ENCODE measurements at regions of chr14 and their contacts with region 1.

Region 1: DNA sequence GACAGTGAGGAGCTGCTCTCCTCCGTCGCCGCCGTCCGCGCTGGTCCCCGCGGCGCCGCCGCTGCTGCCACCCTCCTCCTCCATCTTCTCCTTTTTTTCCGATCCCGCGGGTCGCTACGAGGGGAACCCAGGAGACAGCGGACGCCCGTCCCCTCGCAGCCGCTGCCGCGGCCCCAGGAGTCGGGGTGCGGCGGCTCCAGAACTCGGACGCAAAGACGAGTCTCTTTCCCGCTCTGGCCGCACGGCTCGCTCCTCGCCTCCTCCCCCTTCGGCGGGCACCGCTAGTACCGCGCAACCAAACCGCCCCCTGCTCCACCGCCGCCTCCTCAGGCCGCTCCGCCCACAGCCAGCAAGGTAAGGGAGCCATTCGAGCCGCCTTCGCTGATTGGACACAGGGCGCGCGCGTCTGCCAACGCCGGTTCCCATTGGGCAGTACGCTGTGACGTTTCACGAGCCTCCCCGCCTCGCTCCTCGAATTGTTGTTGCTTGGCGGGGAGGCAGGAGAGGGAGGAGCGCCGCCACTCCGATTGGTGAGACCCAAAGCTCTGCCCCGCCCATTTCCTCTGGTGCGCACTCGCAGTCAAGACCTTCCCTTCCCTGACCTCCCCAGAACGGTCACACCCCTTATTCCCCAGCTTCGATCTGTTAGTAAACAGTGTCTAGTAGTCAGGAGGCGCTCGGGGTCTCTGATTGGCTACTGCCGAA is at the start of gene RPS6KA5:
- DNase-seq: peak; percentile 100
- H3K4me3 Mint-ChIP-seq: peak within 1 kb of the TSS; percentile 81
- H3K27ac Mint-ChIP-seq: peak within 1 kb of the TSS; percentile 43
- H3K4me1 Mint-ChIP-seq: peaks cover 54% of the 10 kb centered on the region
- H3K27me3 Mint-ChIP-seq: no peaks in the 10 kb centered on the region
- total RNA-seq, gene RPS6KA5: 20.5 and 21.4 TPM in 2 replicates

Region 2: GRCh38 chr14:90399541-90400444 is 660.7 kb before region 1 on chr14:
- intact Hi-C with region 1: loop called (anchors 2 kb)
- DNase-seq: peak; percentile 82
- H3K4me3 Mint-ChIP-seq: peak overlapping the region; percentile 94
- H3K27ac Mint-ChIP-seq: peak overlapping the region; percentile 97
- H3K4me1 Mint-ChIP-seq: peaks cover 48% of the 10 kb centered on the region
- H3K27me3 Mint-ChIP-seq: peaks cover 1% of the 10 kb centered on the region

Region 3: DNA sequence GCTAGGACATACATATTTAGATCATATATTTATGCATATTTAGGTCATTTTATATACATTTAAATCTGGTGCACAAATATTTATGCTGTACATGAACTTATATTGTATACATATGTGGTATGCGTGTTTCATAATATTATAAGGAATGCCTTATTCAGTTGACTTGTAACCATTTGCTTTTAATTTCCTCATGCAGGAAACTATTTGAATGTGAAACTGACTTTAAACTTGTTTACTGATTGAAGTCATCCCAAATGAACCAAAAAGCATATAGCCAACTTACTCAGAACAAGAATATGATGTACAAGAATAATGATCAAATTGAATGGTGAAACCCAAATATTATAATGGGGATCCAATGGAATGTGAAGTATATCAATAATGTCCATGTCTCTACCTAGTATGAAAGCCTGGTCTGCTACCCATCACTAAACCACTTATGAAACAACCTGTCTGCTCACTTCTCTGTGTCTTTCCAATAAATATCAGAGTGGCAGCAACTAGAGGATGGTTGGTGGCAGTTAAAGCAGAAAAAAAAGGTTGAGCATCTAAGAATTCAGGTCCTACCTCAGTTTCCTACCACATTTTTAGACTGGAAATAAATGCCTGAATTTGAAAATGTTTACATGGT is 38.4 kb before region 1 on chr14:
- intact Hi-C with region 1: loop called (anchors 1 kb)
- DNase-seq: no peak
- H3K4me3 Mint-ChIP-seq: peak overlapping the region; percentile 66
- H3K27ac Mint-ChIP-seq: peak overlapping the region; percentile 90
- H3K4me1 Mint-ChIP-seq: peaks cover 57% of the 10 kb centered on the region
- H3K27me3 Mint-ChIP-seq: no peaks in the 10 kb centered on the region

Region 4: GRCh38 chr14:91038438-91038837 is 22.1 kb before region 1 on chr14:
- intact Hi-C with region 1: no loop called
- DNase-seq: no peak
- H3K4me3 Mint-ChIP-seq: no peak overlapping the region
- H3K27ac Mint-ChIP-seq: no peak overlapping the region
- H3K4me1 Mint-ChIP-seq: peaks cover 64% of the 10 kb centered on the region
- H3K27me3 Mint-ChIP-seq: no peaks in the 10 kb centered on the region

Region 5: DNA sequence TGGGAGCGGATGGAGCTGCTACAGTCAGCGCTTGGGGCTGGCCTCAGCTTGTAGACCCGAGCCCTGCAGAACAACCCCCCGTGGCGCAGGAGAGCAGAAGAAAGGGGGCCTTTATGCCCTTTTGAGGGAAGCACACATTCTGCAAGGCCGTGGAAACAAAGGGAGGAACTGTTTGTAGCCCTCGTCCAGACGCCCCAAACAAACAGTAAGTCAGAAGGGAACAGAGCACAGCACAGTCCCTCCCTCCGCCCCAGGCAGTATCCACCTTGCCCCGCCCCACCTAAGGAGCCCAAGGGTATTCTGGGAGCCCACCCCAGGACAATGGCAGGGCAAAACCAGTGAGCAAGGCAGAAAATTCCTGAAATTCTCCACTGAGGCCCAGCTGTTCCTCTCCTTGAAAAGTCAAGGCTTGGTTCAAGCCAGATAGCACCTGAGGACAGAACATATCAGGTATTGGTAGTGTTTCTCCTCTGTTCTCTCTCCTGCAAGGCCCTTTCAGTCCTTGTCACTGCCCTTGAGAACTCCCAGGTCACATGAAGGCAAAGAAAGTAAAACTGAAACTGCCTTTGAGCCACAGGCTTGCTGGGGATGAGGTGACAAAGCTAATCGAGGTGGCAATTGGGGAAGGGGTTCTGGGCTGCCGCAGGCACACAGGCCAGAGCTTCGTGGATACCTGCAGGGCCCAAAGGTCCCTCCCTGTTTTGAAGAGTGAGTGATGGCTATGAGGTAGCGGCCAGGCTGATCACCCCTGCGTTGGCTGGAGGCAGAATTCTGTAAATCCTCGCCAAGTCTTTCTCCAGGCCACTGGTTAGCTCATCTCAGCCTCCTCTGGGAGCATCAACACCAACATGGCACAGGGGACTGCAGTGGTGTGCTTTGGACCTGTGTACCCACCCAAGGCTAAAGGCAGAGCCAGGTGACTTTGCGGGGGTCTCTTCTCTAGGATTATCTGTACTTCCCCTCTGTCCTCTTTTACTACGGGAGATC is 53.9 kb after region 1 on chr14:
- intact Hi-C with region 1: loop called (anchors 1 kb)
- DNase-seq: peak; percentile 77
- H3K4me3 Mint-ChIP-seq: peak overlapping the region; percentile 95
- H3K27ac Mint-ChIP-seq: peak overlapping the region; percentile 92
- H3K4me1 Mint-ChIP-seq: peaks cover 59% of the 10 kb centered on the region
- H3K27me3 Mint-ChIP-seq: no peaks in the 10 kb centered on the region

Region 6: GRCh38 chr14:91303091-91303923 is 242.8 kb after region 1 on chr14:
- intact Hi-C with region 1: loop called (anchors 5 kb)
- DNase-seq: peak; percentile 56
- H3K4me3 Mint-ChIP-seq: peak overlapping the region; percentile 27
- H3K27ac Mint-ChIP-seq: peak overlapping the region; percentile 97
- H3K4me1 Mint-ChIP-seq: peaks cover 46% of the 10 kb centered on the region
- H3K27me3 Mint-ChIP-seq: no peaks in the 10 kb centered on the region